Left ventricle myocardium superior (tissue), 1 donor: ENCODE measurements at regions of chr16 and their contacts with region 1.

Region 1: DNA sequence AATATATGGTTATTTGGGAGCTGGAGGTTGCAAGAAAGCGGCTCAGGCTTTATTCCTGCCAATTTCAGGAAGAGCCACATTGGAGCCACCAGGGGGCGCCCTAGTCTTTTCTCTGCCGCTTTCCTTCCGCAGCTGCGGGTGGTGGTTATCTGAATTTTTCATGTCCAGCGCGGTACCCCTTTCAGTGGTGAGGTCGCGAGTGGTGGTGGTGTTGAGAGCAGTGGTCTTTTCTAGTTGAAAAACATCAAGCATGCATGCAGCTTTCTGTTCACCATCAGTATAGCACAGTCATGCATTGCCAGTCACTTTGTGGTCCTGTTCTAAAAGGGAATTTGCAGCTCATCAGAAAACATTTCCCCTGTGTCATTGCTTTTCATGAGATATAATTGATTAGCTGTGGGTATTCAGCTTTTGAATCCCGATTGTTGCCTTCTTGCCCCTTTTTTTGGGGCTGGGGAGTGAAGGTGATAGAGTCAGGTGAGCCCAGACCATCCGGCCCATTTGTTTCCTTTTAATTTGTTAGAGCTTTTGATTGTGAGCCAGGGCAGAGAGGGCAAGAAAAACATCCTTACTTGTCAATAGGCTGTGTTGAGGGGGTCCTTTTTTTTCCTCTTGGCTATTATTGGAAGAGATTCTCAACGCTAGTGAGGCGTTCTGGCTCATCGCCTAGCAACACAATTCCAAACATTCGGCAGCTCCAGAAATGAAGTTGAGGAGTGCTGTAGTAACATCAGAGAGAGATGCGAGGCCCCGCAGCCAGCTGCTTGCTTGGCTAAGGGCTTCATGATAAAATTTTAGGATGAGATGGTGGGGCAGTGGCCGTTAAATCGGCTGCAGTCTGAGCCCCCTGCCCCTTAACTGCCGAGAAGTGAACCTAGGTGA is 119.0 kb downstream of the SNX29 start:
- DNase-seq: peak; percentile 82
- ATAC-seq: peak; percentile 78

Region 2: GRCh38 chr16:11833951-11834695 is 261.4 kb before region 1 on chr16:
- intact Hi-C with region 1: no loop called
- DNase-seq: no peak
- ATAC-seq: no peak

Region 3: GRCh38 chr16:12260647-12261262 is 165.2 kb after region 1 on chr16:
- intact Hi-C with region 1: loop called (anchors 10 kb)
- DNase-seq: peak; percentile 44
- ATAC-seq: peak; percentile 54

Region 4: GRCh38 chr16:13110124-13110796 is 1014.7 kb after region 1 on chr16:
- intact Hi-C with region 1: no loop called
- DNase-seq: no peak
- ATAC-seq: no peak